ENCODE measurements at regions of chr9 and their contacts with region 1.

Region 1: DNA sequence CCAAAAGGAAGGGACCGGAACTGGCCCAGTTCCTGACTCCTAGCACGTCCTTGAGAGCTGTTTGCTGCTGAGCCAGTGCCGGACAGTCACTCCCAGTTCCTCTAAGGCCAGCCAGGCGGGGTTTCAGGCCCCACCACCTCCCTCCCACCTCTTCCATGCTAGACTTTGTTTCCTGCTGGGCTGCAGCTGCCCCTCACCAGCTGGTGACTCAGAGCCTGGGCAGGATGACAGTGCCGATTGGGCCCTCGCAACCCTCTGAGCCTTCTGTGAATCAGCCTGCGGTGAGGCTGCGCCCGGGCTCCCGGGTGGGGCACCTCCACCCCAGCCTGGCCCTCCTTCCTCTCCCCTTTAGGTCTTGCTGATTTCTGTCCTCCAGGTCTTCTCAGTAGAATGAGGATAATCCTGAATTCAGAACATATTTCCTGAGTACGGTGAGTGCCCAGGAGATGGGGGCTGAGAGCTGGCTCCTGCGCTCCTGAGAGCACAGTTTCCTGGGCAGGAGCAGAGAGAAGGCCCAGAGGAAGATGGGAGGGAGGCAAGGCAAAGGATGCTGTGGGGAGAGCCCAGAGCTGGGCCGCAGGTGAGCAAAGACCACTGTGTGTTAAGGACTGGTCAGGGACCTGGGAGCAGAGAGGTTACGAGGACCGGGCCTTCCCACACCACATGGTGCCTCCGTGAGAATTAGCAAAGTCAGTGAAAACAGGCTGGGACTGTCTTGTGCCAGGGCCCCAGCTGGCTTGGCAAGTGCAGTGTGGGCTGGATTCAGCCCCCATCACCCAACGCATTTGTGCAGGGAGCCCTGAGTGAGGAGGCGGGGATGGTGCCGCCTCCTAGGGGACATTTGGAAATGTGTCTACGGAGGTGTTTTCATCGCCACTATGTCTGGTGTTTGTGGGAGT is 32.9 kb upstream of the STXBP1 start:
- DNase-seq: peak in 3 of 4 donors; percentile 72 to 95 (median 94)
- ATAC-seq: peak; percentile 90
- H3K4me3 ChIP-seq: peak overlapping the region; percentile 17 to 41
- H3K27ac ChIP-seq: peak overlapping the region; percentile 86 to 93
- H3K4me1 ChIP-seq: peaks cover 27 to 83% of the 10 kb centered on the region in 2 donors
- H3K27me3 ChIP-seq: no peaks in the 10 kb centered on the region
- CTCF ChIP-seq: peak in 1 of 2 donors; percentile 29

Region 2: DNA sequence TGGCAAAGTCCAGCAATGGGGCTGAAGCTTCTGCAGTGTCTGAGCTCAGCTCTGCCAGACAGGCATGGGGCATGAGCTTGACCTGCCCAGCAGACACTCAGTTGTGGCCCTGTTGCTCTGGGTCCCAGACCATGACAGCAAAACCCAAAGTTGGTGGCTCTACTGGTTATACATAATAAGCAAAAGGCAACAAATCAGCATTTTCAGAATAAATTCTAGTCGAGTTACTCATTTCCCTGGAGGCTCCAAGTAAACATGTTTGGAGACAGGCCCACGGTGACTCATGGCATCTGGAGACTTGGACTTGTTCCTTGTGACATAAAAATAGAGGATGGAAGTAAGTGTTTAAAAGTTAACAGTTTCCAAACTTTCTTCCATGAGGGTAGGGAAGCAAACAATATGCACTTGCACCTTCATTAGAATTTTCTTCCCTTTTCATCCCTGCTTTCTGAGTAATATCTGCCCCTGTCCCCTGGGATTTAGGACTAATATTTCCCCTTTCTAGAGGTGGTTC is 242.4 kb before region 1 on chr9:
- intact Hi-C with region 1: no loop called
- DNase-seq: peak in 3 of 4 donors; percentile 70 to 83 (median 74)
- ATAC-seq: peak; percentile 79
- H3K4me3 ChIP-seq: no peak overlapping the region
- H3K27ac ChIP-seq: peak overlapping the region; percentile 31 to 83
- H3K4me1 ChIP-seq: peaks cover 8 to 17% of the 10 kb centered on the region in 2 donors
- H3K27me3 ChIP-seq: no peaks in the 10 kb centered on the region
- CTCF ChIP-seq: no peak

Region 3: GRCh38 chr9:127525401-127526187 is 53.6 kb before region 1 on chr9:
- intact Hi-C with region 1: loop called in 1 of 2 experiments (anchors 10 kb)
- DNase-seq: no peak
- ATAC-seq: peak; percentile 39
- H3K4me3 ChIP-seq: no peak overlapping the region
- H3K27ac ChIP-seq: no peak overlapping the region
- H3K4me1 ChIP-seq: peaks cover 15 to 52% of the 10 kb centered on the region in 2 donors
- H3K27me3 ChIP-seq: no peaks in the 10 kb centered on the region
- CTCF ChIP-seq: peak; percentile 51 to 77

Region 4: GRCh38 chr9:127838375-127839078 is 259.3 kb after region 1 on chr9:
- intact Hi-C with region 1: no loop called
- DNase-seq: peak in 2 of 4 donors; percentile 88 to 92
- ATAC-seq: peak; percentile 80
- H3K4me3 ChIP-seq: peak overlapping the region in 1 of 2 donors; percentile 8
- H3K27ac ChIP-seq: peak overlapping the region; percentile 90 to 92
- H3K4me1 ChIP-seq: peaks cover 49 to 89% of the 10 kb centered on the region in 2 donors
- H3K27me3 ChIP-seq: no peaks in the 10 kb centered on the region
- CTCF ChIP-seq: no peak

Region 5: DNA sequence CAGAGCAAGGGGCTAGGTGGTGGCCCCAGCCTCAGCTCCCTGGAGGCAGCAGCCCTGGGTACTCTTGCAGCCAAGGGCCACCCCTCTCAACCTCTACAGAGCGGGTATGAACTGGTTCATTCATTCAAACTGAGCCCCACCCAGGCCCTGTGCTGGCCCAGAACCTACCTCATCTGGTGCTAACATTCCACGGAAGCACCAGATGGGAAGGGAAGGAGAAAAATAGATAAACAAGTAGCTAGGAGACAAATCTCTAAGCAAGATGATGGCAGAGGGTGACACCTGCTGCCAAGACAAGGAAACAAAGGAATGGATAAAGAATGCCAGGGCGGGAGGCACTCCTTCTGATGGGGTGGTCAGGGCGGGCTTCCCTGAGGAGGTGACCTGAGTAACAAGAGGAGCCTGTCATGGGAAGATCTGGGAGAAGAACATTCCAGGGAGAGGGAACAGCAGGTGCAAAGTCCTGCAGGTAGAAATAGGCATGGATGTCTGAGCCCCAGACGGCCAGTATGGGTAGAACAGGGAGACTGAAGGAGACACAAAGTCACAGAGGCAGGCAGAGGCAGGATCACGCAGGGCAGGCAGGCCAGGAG is 331.5 kb after region 1 on chr9:
- intact Hi-C with region 1: no loop called
- DNase-seq: no peak
- ATAC-seq: no peak
- H3K4me3 ChIP-seq: no peak overlapping the region
- H3K27ac ChIP-seq: peak overlapping the region; percentile 41 to 44
- H3K4me1 ChIP-seq: peaks cover 31 to 56% of the 10 kb centered on the region in 2 donors
- H3K27me3 ChIP-seq: no peaks in the 10 kb centered on the region
- CTCF ChIP-seq: no peak

Measured in left lung (tissue), 14 donors.